Prostate gland (tissue), 2 donors: ENCODE measurements at regions of chr12 and their contacts with region 1.

Region 1: DNA sequence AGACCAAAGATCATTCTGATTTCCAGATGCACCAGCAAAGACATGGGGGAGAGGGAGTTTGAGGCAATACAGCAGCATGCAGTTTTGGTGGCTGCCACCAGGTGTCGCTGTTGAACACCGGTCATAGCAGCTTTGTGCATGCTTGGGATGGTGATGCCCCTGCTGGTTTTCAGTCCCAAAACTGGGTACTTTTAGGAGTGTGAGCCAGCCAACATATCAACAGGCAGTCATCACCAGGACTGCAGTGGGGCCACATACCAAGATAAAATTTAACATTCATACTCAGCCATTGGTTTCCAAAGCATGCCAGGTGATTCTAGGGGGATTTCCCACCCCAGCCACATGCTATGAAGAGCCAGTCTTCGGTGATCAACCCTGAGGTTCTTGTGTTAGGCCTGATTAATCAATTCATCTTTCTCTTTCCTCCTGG is 64.2 kb downstream of the PHETA1 start:
- DNase-seq: no peak
- H3K4me3 ChIP-seq: no peak overlapping the region
- H3K27ac ChIP-seq: no peak overlapping the region
- H3K4me1 ChIP-seq: no peaks in the 10 kb centered on the region
- H3K27me3 ChIP-seq: no peaks in the 10 kb centered on the region
- CTCF ChIP-seq: peak in 2 of 4 experiments; percentile 10 to 36
- POLR2A ChIP-seq: no peak

Region 2: GRCh38 chr12:110940933-110941332 is 363.7 kb before region 1 on chr12:
- intact Hi-C with region 1: loop called (anchors 5 kb)
- DNase-seq: no peak
- H3K4me3 ChIP-seq: no peak overlapping the region
- H3K27ac ChIP-seq: no peak overlapping the region
- H3K4me1 ChIP-seq: no peaks in the 10 kb centered on the region
- H3K27me3 ChIP-seq: no peaks in the 10 kb centered on the region
- CTCF ChIP-seq: no peak
- POLR2A ChIP-seq: no peak

Region 3: GRCh38 chr12:111330800-111331752 is 26.4 kb after region 1 on chr12:
- intact Hi-C with region 1: no loop called
- DNase-seq: no peak
- H3K4me3 ChIP-seq: no peak overlapping the region
- H3K27ac ChIP-seq: no peak overlapping the region
- H3K4me1 ChIP-seq: no peaks in the 10 kb centered on the region
- H3K27me3 ChIP-seq: no peaks in the 10 kb centered on the region
- CTCF ChIP-seq: peak in 2 of 4 experiments; percentile 8 to 33
- POLR2A ChIP-seq: no peak